Activated B cell treated with CpG ODN at 0.5 μM for 24 hours (primary cell): ENCODE measurements at regions of chrX and their contacts with region 1.

Region 1: DNA sequence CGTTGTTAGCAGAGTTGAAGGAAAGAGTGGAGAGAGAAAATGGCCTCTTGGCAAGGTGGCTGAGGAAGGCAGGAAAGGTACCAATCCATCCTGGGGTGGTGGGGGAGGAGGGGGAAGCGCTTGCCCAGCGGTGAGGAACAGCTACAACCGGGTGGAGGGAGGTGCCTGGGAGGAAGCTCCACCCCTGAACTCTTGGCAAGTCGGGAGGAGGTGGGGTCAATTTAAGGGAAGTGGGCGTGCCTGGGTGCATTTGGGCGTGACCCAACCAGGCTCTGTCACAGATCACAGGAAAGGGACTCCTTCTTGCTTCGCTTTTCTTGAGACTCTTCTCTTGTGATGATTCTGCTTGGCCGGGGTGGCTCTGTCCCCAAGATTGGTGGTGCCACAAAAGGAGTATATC is 41.7 kb downstream of the BCORL1 start:
- DNase-seq: peak; percentile 64
- ATAC-seq: peak; percentile 100
- H3K4me3 Mint-ChIP-seq: peak overlapping the region; percentile 58
- H3K27ac Mint-ChIP-seq: peak overlapping the region; percentile 78
- H3K4me1 Mint-ChIP-seq: peaks cover 15% of the 10 kb centered on the region
- H3K27me3 Mint-ChIP-seq: no peaks in the 10 kb centered on the region
- CTCF ChIP-seq: no peak

Region 2: DNA sequence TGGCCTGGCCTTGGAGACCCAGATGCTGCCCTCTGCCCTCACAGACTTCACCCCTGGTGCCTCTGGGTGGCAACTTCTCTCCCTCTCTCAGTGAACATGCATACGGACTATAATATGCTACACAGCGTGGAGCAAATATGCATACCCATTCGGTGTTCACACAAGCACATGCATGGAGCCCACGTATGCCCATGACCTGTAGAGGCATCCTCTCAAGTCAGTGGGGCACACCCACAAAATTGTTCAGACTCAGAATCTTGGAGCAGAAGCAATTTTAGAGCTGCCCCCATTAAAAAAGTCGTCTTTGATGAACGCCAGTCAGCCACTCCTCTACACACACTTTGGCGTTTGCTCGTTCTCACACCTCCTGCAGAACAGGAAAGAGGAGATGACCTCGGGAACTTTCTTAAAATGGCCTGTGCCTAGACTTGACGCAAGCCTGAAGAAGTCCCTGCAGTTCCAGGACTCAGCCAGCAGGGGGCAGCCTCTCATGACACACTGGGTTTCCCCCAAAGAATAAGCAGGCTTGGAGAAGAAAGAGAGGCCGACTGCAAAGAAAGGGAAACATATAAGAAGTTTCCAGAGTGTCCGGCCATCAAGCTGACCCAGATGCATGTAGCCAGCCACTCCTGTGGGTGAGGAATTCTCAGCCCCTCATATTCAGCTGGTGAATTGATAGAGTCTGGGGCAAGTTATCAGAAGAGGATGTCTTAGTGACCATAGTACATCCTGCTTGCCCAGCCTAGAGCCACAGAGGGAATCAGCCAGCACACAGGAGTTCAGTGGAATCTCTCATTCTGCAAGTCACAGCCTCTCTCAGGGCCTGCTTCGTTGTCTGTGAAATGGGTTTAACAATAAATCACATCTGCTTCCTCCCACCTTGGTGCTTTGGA is 386.7 kb before region 1 on chrX:
- CTCF ChIA-PET with region 1: interaction called, 3 read pairs
- POLR2A ChIA-PET with region 1: no interaction called
- intact Hi-C with region 1: loop called (anchors 1 kb)
- DNase-seq: peak; percentile 58
- ATAC-seq: peak; percentile 67
- H3K4me3 Mint-ChIP-seq: no peak overlapping the region
- H3K27ac Mint-ChIP-seq: no peak overlapping the region
- H3K4me1 Mint-ChIP-seq: no peaks in the 10 kb centered on the region
- H3K27me3 Mint-ChIP-seq: no peaks in the 10 kb centered on the region
- CTCF ChIP-seq: no peak

Region 3: GRCh38 chrX:129772796-129773431 is 251.2 kb before region 1 on chrX:
- CTCF ChIA-PET with region 1: no interaction called
- POLR2A ChIA-PET with region 1: no interaction called
- intact Hi-C with region 1: no loop called
- DNase-seq: peak; percentile 59
- ATAC-seq: peak; percentile 76
- H3K4me3 Mint-ChIP-seq: peak overlapping the region; percentile 62
- H3K27ac Mint-ChIP-seq: peak overlapping the region; percentile 97
- H3K4me1 Mint-ChIP-seq: peaks cover 84% of the 10 kb centered on the region
- H3K27me3 Mint-ChIP-seq: no peaks in the 10 kb centered on the region
- CTCF ChIP-seq: no peak

Region 4: DNA sequence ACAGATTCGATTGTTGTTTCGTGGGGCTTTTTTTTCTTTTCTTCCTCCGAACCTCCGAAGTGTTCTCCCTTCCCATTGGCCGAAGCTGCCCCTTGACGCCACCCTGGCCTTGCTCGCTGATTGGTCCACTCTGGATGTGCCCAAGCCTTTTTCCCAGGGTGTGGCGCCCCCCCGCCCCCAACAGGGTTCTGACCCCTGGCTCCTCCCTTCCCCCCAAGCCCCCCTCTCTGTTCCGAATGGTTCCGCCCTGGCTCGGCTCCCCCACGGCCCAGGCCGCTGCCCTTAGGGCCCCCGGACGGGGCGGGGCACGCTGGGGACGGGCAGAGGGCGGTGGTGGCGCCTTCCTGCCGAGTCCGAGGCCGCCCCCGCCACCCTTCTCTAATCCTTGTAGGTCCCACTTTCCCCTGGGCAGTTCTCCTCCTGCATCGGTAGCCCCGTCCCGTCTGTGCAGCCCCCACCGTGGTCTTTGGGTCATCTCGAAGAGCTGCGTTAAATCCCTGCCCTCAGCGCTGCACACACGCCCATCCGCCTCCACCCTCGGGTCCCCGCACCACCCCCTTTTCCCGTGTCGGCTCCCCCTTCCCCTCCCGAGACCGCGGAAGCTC is 92.6 kb before region 1 on chrX:
- CTCF ChIA-PET with region 1: interaction called, 137 read pairs
- POLR2A ChIA-PET with region 1: interaction called, 21 read pairs
- intact Hi-C with region 1: loop called (anchors 1 kb)
- DNase-seq: peak; percentile 59
- ATAC-seq: peak; percentile 70
- H3K4me3 Mint-ChIP-seq: peak overlapping the region; percentile 86
- H3K27ac Mint-ChIP-seq: peak overlapping the region; percentile 90
- H3K4me1 Mint-ChIP-seq: peaks cover 5% of the 10 kb centered on the region
- H3K27me3 Mint-ChIP-seq: no peaks in the 10 kb centered on the region
- CTCF ChIP-seq: no peak

Region 5: GRCh38 chrX:129957241-129958082 is 66.7 kb before region 1 on chrX:
- CTCF ChIA-PET with region 1: interaction called, 3 read pairs
- POLR2A ChIA-PET with region 1: interaction called, 4 read pairs
- intact Hi-C with region 1: loop called (anchors 1 kb)
- DNase-seq: peak; percentile 64
- ATAC-seq: peak; percentile 73
- H3K4me3 Mint-ChIP-seq: peak overlapping the region; percentile 77
- H3K27ac Mint-ChIP-seq: peak overlapping the region; percentile 59
- H3K4me1 Mint-ChIP-seq: peaks cover 37% of the 10 kb centered on the region
- H3K27me3 Mint-ChIP-seq: peaks cover 2% of the 10 kb centered on the region
- CTCF ChIP-seq: no peak

Region 6: GRCh38 chrX:130060122-130061069 is 36.3 kb after region 1 on chrX:
- CTCF ChIA-PET with region 1: interaction called, 6 read pairs
- POLR2A ChIA-PET with region 1: no interaction called
- intact Hi-C with region 1: loop called (anchors 2 kb)
- DNase-seq: peak; percentile 85
- ATAC-seq: peak; percentile 89
- H3K4me3 Mint-ChIP-seq: peak overlapping the region; percentile 85
- H3K27ac Mint-ChIP-seq: peak overlapping the region; percentile 87
- H3K4me1 Mint-ChIP-seq: peaks cover 3% of the 10 kb centered on the region
- H3K27me3 Mint-ChIP-seq: no peaks in the 10 kb centered on the region
- CTCF ChIP-seq: no peak

Region 7: DNA sequence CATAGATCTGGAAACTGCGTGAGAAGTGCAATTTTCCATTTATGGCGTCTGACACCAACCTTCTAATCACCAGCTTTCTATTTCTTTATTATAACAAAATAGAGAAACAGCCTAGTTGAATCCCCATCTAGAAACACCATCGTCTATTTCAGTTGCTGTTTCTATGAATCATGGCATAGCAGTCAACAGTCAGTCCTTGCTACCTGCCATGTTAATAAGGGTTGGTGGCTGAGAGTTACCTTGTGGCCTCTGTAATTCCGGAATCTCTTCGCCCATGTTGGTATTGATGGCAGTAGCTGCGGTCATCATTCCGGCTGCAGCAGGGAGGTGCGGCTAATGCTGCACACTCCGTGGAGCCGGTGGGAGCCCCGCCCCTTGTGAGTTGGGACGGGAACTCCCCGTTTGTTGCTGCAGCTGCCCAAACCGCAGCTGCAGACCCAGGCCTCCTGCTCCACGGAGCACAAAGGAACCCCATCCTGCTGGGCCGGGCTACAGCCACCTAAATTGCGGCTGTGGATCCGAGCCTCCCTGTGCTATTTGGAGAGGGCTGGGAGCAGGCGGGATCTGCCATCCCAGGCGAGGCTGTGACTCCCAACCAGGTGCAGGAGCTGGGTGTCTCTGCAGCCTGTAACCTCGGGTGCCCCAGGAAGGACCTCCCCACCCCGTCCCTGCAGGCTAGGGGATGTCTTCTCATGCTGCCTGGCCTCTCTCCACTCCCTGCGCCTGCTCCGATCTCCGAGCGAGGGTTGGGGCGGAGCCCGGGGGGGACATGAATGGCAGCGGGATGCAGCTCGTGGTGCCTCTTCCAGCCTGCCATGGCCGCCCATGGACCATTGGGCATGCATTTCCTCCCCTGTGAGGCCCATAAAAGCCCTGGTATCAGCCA is 1883.6 kb after region 1 on chrX:
- CTCF ChIA-PET with region 1: no interaction called
- POLR2A ChIA-PET with region 1: no interaction called
- intact Hi-C with region 1: no loop called
- DNase-seq: no peak
- ATAC-seq: no peak
- H3K4me3 Mint-ChIP-seq: no peak overlapping the region
- H3K27ac Mint-ChIP-seq: no peak overlapping the region
- H3K4me1 Mint-ChIP-seq: no peaks in the 10 kb centered on the region
- H3K27me3 Mint-ChIP-seq: no peaks in the 10 kb centered on the region
- CTCF ChIP-seq: no peak